Colonic mucosa (tissue), 4 donors: ENCODE measurements at regions of chr5 and their contacts with region 1.

Region 1: GRCh38 chr5:76771705-76772405 is 47.0 kb upstream of the F2RL1 start:
- DNase-seq: no peak
- H3K4me3 ChIP-seq: no peak overlapping the region
- H3K27ac ChIP-seq: no peak overlapping the region
- H3K4me1 ChIP-seq: no peaks in the 10 kb centered on the region
- H3K27me3 ChIP-seq: no peaks in the 10 kb centered on the region
- CTCF ChIP-seq: no peak

Region 2: DNA sequence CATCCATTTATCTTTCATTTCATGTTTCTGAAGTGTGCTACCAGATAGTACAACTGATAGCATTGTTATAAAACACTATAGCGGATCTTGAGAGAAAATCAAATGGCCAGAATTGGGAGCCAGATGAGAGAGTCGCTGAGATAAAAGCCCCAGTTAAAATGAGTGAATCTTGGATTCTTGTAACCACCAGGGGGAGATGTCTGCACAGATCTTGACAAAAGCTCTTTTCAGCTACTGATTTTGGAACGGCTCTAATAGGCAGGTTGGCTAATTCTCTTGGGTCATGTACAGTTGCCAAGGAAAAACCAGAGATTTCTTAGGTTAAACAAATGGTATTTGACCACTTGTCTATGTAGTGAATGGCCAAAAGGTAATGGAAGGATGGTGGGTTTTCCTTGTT is 170.4 kb before region 1 on chr5:
- intact Hi-C with region 1: loop called (anchors 2 kb)
- DNase-seq: peak; percentile 31
- H3K4me3 ChIP-seq: no peak overlapping the region
- H3K27ac ChIP-seq: no peak overlapping the region
- H3K4me1 ChIP-seq: peaks cover 3% of the 10 kb centered on the region
- H3K27me3 ChIP-seq: no peaks in the 10 kb centered on the region
- CTCF ChIP-seq: peak; percentile 69

Region 3: DNA sequence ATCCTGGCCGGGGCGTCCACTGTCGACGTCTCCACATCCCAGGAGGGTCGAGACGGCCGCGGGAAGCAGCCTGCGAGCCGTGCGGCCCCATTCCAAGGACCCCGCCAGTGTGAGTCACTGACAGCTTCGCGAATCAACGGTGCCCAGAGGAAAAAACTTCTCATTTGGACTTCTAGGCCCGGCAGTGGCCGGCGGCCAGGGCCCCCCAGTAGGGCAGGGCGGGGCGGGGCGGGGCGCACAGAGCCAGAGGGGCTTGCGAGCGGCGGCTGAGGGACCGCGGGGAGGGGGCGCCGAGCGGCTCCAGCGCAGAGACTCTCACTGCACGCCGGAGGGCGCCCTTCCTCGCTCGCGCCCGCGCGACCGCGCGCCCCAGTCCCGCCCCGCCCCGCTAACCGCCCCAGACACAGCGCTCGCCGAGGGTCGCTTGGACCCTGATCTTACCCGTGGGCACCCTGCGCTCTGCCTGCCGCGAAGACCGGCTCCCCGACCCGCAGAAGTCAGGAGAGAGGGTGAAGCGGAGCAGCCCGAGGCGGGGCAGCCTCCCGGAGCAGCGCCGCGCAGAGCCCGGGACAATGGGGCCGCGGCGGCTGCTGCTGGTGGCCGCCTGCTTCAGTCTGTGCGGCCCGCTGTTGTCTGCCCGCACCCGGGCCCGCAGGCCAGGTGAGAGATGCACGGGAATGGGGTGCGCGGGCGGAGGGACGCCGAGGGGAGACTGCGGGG is 56.0 kb before region 1 on chr5 and contains the start of gene F2R:
- intact Hi-C with region 1: loop called (anchors 5 kb)
- DNase-seq: peak; percentile 64
- H3K4me3 ChIP-seq: peak within 1 kb of the TSS; percentile 80
- H3K27ac ChIP-seq: peak within 1 kb of the TSS; percentile 3
- H3K4me1 ChIP-seq: no peaks in the 10 kb centered on the region
- H3K27me3 ChIP-seq: peaks cover 5% of the 10 kb centered on the region
- CTCF ChIP-seq: peak; percentile 44
- total RNA-seq, gene F2R: 3.6 to 8.1 TPM